Naive thymus-derived CD4-positive, alpha-beta T cell (primary cell): ENCODE measurements at regions of chr1 and their contacts with region 1.

Region 1: DNA sequence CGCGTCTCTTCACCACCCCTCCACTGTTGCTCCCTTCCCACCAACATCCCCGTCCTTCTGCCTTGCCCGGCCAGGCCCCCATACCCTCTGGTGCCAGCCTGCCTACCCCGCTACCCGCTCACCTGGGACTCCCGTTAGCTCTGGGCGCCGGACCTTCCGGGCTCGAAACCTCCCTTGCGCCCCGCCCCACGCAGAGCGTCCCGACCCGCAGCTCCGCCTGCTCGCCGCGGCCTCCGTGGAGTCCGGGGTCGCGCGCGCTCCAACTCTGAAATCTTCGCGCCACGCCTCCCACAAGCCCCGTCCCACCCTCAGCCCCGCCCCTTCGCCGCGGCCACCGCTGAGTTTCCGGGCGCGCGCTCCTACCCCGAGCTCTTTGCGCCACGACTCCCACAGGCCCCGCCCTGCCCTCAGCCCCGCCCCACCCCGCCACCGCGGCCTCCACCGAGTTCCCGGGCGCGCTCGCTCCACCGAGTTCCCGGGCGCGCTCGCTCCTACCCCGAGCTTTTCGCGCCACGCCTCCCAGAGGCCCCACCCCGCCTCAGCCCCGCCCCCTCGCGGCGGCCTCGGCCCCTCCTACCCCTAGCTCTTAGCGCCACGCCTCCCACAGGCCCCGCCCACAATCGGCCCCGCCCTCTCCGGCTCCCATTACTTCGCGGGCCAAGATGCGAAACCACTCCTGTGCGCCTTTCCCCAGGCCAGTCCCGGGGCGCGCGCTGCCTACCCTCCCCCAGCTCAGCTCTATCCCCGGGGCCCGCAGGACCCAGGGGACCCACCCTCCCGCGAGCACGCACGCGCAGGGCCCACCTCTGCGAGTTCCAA is at the start of gene IFT25:
- DNase-seq: peak; percentile 96 to 100 (median 99)
- ATAC-seq: peak; percentile 92
- H3K4me3 ChIP-seq: peak within 1 kb of the TSS; percentile 70
- H3K4me3 Mint-ChIP-seq: peak within 1 kb of the TSS; percentile 91 to 97 (median 96)
- H3K27ac ChIP-seq: peak within 1 kb of the TSS; percentile 83
- H3K27ac Mint-ChIP-seq: peak within 1 kb of the TSS; percentile 83 to 96 (median 93)
- H3K4me1 ChIP-seq: peaks cover 17 to 30% of the 10 kb centered on the region in 2 donors
- H3K4me1 Mint-ChIP-seq: peaks cover 33 to 64% (median 56%) of the 10 kb centered on the region in 7 donors
- H3K27me3 ChIP-seq: no peaks in the 10 kb centered on the region
- H3K27me3 Mint-ChIP-seq: no peaks in the 10 kb centered on the region
- total RNA-seq, gene IFT25: 17.5 to 59.9 (median 41.3) TPM

Region 2: GRCh38 chr1:53196485-53197270 is 749.0 kb before region 1 on chr1 and contains the start of gene CPT2:
- CTCF ChIA-PET with region 1: no interaction called
- POLR2A ChIA-PET with region 1: no interaction called
- intact Hi-C with region 1: loop called in 1 of 2 experiments (anchors 1 kb)
- DNase-seq: peak; percentile 78 to 94 (median 89)
- ATAC-seq: peak; percentile 99
- H3K4me3 ChIP-seq: peak within 1 kb of the TSS; percentile 91
- H3K4me3 Mint-ChIP-seq: peak within 1 kb of the TSS; percentile 88 to 100 (median 98)
- H3K27ac ChIP-seq: peak within 1 kb of the TSS; percentile 98
- H3K27ac Mint-ChIP-seq: peak within 1 kb of the TSS; percentile 90 to 100 (median 97)
- H3K4me1 ChIP-seq: peaks cover 16 to 20% of the 10 kb centered on the region in 2 donors
- H3K4me1 Mint-ChIP-seq: peaks cover 13 to 48% (median 44%) of the 10 kb centered on the region in 7 donors
- H3K27me3 ChIP-seq: no peaks in the 10 kb centered on the region
- H3K27me3 Mint-ChIP-seq: no peaks in the 10 kb centered on the region
- total RNA-seq, gene CPT2: 8.8 to 23.0 (median 13.4) TPM

Region 3: GRCh38 chr1:53498555-53499142 is 447.0 kb before region 1 on chr1:
- CTCF ChIA-PET with region 1: no interaction called
- POLR2A ChIA-PET with region 1: no interaction called
- intact Hi-C with region 1: no loop called
- DNase-seq: no peak
- ATAC-seq: no peak
- H3K4me3 ChIP-seq: no peak overlapping the region
- H3K4me3 Mint-ChIP-seq: no peak overlapping the region
- H3K27ac ChIP-seq: no peak overlapping the region
- H3K27ac Mint-ChIP-seq: no peak overlapping the region
- H3K4me1 ChIP-seq: peaks cover 0 to 7% of the 10 kb centered on the region in 2 donors
- H3K4me1 Mint-ChIP-seq: peaks cover 0 to 4% (median 0%) of the 10 kb centered on the region in 7 donors
- H3K27me3 ChIP-seq: no peaks in the 10 kb centered on the region
- H3K27me3 Mint-ChIP-seq: peaks cover 0 to 14% (median 0%) of the 10 kb centered on the region in 5 donors

Region 4: DNA sequence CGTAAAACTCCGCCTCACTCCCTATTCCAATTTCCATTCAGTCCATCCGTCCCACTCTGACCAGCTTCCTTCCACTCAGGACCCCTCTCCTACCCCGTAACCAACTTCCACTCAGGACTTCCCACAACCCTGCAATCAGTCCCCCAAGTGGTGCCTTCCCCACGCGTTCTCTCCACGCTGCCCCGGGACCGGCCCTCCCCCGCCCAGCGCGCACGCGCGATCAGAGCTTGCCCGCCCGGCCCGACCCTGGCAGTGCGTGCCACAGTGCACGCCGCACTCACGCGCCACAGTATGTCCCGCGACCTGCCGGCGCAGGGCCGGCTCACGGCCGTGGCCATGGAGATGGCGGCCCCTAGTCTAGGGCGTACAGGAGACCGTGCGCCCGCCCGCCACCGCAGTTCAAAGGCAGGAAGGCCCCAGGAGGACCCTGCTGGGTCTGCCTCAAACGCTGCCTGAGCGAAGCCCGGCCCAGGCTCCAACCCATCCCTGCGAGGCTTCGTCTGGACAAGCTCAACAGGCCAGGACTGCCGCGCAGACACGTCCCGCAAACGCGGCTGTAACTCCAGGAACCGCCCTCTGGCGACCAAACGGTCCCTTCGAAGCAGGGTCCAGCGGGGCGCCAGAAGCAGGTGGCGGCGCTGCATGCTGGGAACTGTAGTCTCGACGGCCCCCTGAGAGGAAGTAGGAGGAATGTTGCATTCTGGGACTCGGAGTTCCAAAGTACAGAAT is 107.6 kb before region 1 on chr1 and contains the start of gene NDC1:
- CTCF ChIA-PET with region 1: no interaction called
- POLR2A ChIA-PET with region 1: interaction called, 5 read pairs
- intact Hi-C with region 1: loop called (anchors 1 kb)
- DNase-seq: peak; percentile 84 to 95 (median 92)
- ATAC-seq: peak; percentile 95
- H3K4me3 ChIP-seq: peak within 1 kb of the TSS; percentile 92
- H3K4me3 Mint-ChIP-seq: peak within 1 kb of the TSS; percentile 96 to 100 (median 99)
- H3K27ac ChIP-seq: peak within 1 kb of the TSS; percentile 95
- H3K27ac Mint-ChIP-seq: peak within 1 kb of the TSS; percentile 96 to 99 (median 98)
- H3K4me1 ChIP-seq: no peaks in the 10 kb centered on the region
- H3K4me1 Mint-ChIP-seq: peaks cover 10 to 41% (median 30%) of the 10 kb centered on the region in 7 donors
- H3K27me3 ChIP-seq: no peaks in the 10 kb centered on the region
- H3K27me3 Mint-ChIP-seq: no peaks in the 10 kb centered on the region
- total RNA-seq, gene NDC1: 6.9 to 20.2 (median 13.2) TPM

Region 5: GRCh38 chr1:53889304-53890298 is 56.0 kb before region 1 on chr1 and contains the start of gene YIPF1:
- CTCF ChIA-PET with region 1: interaction called, 4 read pairs
- POLR2A ChIA-PET with region 1: interaction called, 21 read pairs
- intact Hi-C with region 1: loop called (anchors 1 kb)
- DNase-seq: peak; percentile 61 to 88 (median 85)
- ATAC-seq: peak; percentile 98
- H3K4me3 ChIP-seq: peak within 1 kb of the TSS; percentile 79
- H3K4me3 Mint-ChIP-seq: peak within 1 kb of the TSS; percentile 88 to 98 (median 96)
- H3K27ac ChIP-seq: peak within 1 kb of the TSS; percentile 75
- H3K27ac Mint-ChIP-seq: peak within 1 kb of the TSS; percentile 89 to 97 (median 95)
- H3K4me1 ChIP-seq: peaks cover 20 to 23% of the 10 kb centered on the region in 2 donors
- H3K4me1 Mint-ChIP-seq: peaks cover 26 to 55% (median 51%) of the 10 kb centered on the region in 7 donors
- H3K27me3 ChIP-seq: no peaks in the 10 kb centered on the region
- H3K27me3 Mint-ChIP-seq: peaks cover 0 to 2% (median 0%) of the 10 kb centered on the region in 5 donors
- total RNA-seq, gene YIPF1: 10.5 to 18.0 (median 16.3) TPM

Region 6: GRCh38 chr1:54016313-54017262 is 70.9 kb after region 1 on chr1:
- CTCF ChIA-PET with region 1: no interaction called
- POLR2A ChIA-PET with region 1: no interaction called
- intact Hi-C with region 1: no loop called
- DNase-seq: no peak
- ATAC-seq: no peak
- H3K4me3 ChIP-seq: no peak overlapping the region
- H3K4me3 Mint-ChIP-seq: no peak overlapping the region
- H3K27ac ChIP-seq: no peak overlapping the region
- H3K27ac Mint-ChIP-seq: no peak overlapping the region
- H3K4me1 ChIP-seq: no peaks in the 10 kb centered on the region
- H3K4me1 Mint-ChIP-seq: peaks cover 0 to 2% (median 0%) of the 10 kb centered on the region in 7 donors
- H3K27me3 ChIP-seq: no peaks in the 10 kb centered on the region
- H3K27me3 Mint-ChIP-seq: peaks cover 0 to 4% (median 0%) of the 10 kb centered on the region in 5 donors

Region 7: GRCh38 chr1:54052934-54053744 is 107.5 kb after region 1 on chr1 and contains the starts of genes TCEANC2 and TMEM59:
- CTCF ChIA-PET with region 1: no interaction called
- POLR2A ChIA-PET with region 1: interaction called, 17 read pairs
- intact Hi-C with region 1: loop called (anchors 1 kb)
- DNase-seq: peak; percentile 84 to 99 (median 98)
- ATAC-seq: peak; percentile 94
- H3K4me3 ChIP-seq: peak within 1 kb of the TSS; percentile 94
- H3K4me3 Mint-ChIP-seq: no peak within 1 kb of the TSS
- H3K27ac ChIP-seq: peak within 1 kb of the TSS; percentile 92
- H3K27ac Mint-ChIP-seq: no peak within 1 kb of the TSS
- H3K4me1 ChIP-seq: peaks cover 23 to 34% of the 10 kb centered on the region in 2 donors
- H3K4me1 Mint-ChIP-seq: peaks cover 27 to 62% (median 52%) of the 10 kb centered on the region in 7 donors
- H3K27me3 ChIP-seq: no peaks in the 10 kb centered on the region
- H3K27me3 Mint-ChIP-seq: no peaks in the 10 kb centered on the region
- total RNA-seq, gene TCEANC2: 6.3 to 15.1 (median 12.2) TPM
- total RNA-seq, gene TMEM59: 127 to 197 (median 183) TPM

Region 8: GRCh38 chr1:54764133-54764921 is 818.7 kb after region 1 on chr1 and contains the start of gene PARS2:
- CTCF ChIA-PET with region 1: no interaction called
- POLR2A ChIA-PET with region 1: interaction called, 3 read pairs
- intact Hi-C with region 1: loop called in 1 of 2 experiments (anchors 1 kb)
- DNase-seq: peak; percentile 89 to 98 (median 97)
- ATAC-seq: peak; percentile 96
- H3K4me3 ChIP-seq: peak within 1 kb of the TSS; percentile 95
- H3K4me3 Mint-ChIP-seq: peak within 1 kb of the TSS; percentile 94 to 97 (median 96)
- H3K27ac ChIP-seq: peak within 1 kb of the TSS; percentile 83
- H3K27ac Mint-ChIP-seq: peak within 1 kb of the TSS; percentile 81 to 97 (median 93)
- H3K4me1 ChIP-seq: peaks cover 0 to 9% of the 10 kb centered on the region in 2 donors
- H3K4me1 Mint-ChIP-seq: peaks cover 14 to 26% (median 24%) of the 10 kb centered on the region in 7 donors
- H3K27me3 ChIP-seq: no peaks in the 10 kb centered on the region
- H3K27me3 Mint-ChIP-seq: no peaks in the 10 kb centered on the region
- total RNA-seq, gene PARS2: 0.66 to 7.6 (median 4.7) TPM